ENCODE measurements at regions of chr2 and their contacts with region 1.

Region 1: DNA sequence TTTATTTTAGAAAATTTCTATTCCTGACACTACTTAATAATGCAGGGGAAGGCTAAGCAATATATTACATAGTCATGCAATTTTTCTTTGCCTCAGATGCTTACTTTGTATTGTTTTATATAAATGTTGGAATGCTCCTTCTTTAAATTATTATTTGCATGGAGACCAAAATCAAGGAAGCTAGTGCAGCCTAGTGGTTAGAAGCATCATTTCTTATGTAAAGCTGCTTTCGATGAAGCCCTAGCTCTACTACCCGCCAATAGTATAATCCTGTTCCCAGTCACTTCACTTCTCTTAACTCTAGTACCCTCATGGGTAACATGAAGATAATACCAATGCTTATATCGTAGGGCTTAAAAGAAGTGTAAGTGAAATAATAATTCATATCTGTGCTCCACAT is 198.9 kb downstream of the LRATD1 start:
- DNase-seq: no peak
- H3K4me3 ChIP-seq: no peak overlapping the region
- H3K27ac ChIP-seq: no peak overlapping the region
- H3K27me3 ChIP-seq: no peaks in the 10 kb centered on the region
- CTCF ChIP-seq: peak; percentile 42

Region 2: DNA sequence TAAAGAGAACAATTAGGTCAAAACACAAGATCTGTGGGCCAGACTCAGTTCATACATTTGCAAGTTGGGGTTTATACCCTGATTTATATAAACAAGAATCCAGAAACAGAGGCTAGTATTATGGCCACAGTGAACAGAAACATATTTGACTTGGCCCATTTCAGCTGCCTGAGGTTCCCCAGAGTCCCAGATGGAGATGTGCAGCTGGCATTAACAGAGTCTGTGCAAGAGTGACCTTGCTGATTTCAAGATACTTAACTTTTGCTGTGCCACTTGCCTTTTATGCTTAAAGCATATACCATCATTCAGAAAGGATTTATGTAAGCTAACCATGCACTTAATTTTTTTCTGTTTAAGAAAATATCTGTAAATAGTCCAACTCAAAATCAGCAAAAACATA is 1478.4 kb before region 1 on chr2:
- CTCF ChIA-PET with region 1: interaction called, 15 read pairs
- POLR2A ChIA-PET with region 1: no interaction called
- DNase-seq: no peak
- H3K4me3 ChIP-seq: no peak overlapping the region
- H3K27ac ChIP-seq: no peak overlapping the region
- H3K27me3 ChIP-seq: no peaks in the 10 kb centered on the region
- CTCF ChIP-seq: no peak

Region 3: DNA sequence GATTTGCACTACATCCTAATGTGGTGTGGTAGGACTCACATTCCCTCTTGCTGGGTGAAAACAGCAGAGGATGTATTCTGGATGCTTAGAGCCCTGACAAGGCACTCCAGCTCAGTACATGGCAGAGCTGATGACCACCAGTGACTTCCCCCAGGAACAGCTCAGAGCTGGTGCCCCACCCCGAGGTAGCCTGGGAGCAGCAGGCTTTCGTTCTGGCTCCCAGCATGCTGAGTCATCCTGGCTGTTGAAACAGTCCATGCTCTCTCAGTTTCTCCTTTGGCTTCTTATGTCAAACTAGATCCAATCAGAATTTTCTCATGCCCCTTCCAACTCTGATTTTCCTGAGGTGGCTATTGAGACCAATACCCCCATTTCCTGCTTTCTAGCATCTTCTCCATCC is 291.5 kb after region 1 on chr2:
- CTCF ChIA-PET with region 1: no interaction called
- POLR2A ChIA-PET with region 1: no interaction called
- DNase-seq: no peak
- H3K4me3 ChIP-seq: no peak overlapping the region
- H3K27ac ChIP-seq: no peak overlapping the region
- H3K27me3 ChIP-seq: no peaks in the 10 kb centered on the region
- CTCF ChIP-seq: no peak